ENCODE measurements at regions of chr1 and their contacts with region 1.

Region 1: GRCh38 chr1:182781841-182782586 is 7.6 kb upstream of the NPL start:
- DNase-seq: peak; percentile 51
- ATAC-seq: peak; percentile 88
- H3K4me3 ChIP-seq: no peak overlapping the region
- H3K27ac ChIP-seq: no peak overlapping the region
- H3K4me1 ChIP-seq: peaks cover 5% of the 10 kb centered on the region; the same call in 1 of the 2 replicates
- H3K27me3 ChIP-seq: no peaks in the 10 kb centered on the region
- CTCF ChIP-seq: peak; percentile 83 to 95 (median 89)
- EP300 ChIP-seq: no peak
- POLR2A ChIP-seq: no peak
- RAD21 ChIP-seq: peak; percentile 97

Region 2: GRCh38 chr1:182084487-182085316 is 697.3 kb before region 1 on chr1:
- CTCF ChIA-PET with region 1: interaction called, 4 read pairs
- POLR2A ChIA-PET with region 1: no interaction called
- RAD21 ChIA-PET with region 1: interaction called, 3 read pairs
- SMC1A ChIA-PET with region 1: interaction called, 5 read pairs
- in situ Hi-C with region 1: no loop called
- intact Hi-C with region 1: loop called (anchors 5 kb)
- DNase-seq: no peak
- ATAC-seq: peak; percentile 94
- H3K4me3 ChIP-seq: no peak overlapping the region
- H3K27ac ChIP-seq: no peak overlapping the region
- H3K4me1 ChIP-seq: no peaks in the 10 kb centered on the region
- H3K27me3 ChIP-seq: no peaks in the 10 kb centered on the region
- CTCF ChIP-seq: peak; percentile 67 to 75 (median 74)
- EP300 ChIP-seq: no peak
- POLR2A ChIP-seq: no peak
- RAD21 ChIP-seq: peak; percentile 89

Region 3: GRCh38 chr1:182430263-182431068 is 351.5 kb before region 1 on chr1:
- CTCF ChIA-PET with region 1: interaction called, 8 read pairs
- POLR2A ChIA-PET with region 1: no interaction called
- RAD21 ChIA-PET with region 1: interaction called, 4 read pairs
- SMC1A ChIA-PET with region 1: interaction called, 18 read pairs
- in situ Hi-C with region 1: no loop called
- intact Hi-C with region 1: no loop called
- DNase-seq: peak; percentile 50
- ATAC-seq: peak; percentile 52
- H3K4me3 ChIP-seq: no peak overlapping the region
- H3K27ac ChIP-seq: peak overlapping the region; percentile 48
- H3K4me1 ChIP-seq: peaks cover 34% of the 10 kb centered on the region
- H3K27me3 ChIP-seq: no peaks in the 10 kb centered on the region
- CTCF ChIP-seq: no peak
- EP300 ChIP-seq: 0 out of 4 replicates have a peak, but pooled peaks of 1 of the 2 experiments have one; percentile 26
- POLR2A ChIP-seq: no peak
- RAD21 ChIP-seq: no peak

Region 4: DNA sequence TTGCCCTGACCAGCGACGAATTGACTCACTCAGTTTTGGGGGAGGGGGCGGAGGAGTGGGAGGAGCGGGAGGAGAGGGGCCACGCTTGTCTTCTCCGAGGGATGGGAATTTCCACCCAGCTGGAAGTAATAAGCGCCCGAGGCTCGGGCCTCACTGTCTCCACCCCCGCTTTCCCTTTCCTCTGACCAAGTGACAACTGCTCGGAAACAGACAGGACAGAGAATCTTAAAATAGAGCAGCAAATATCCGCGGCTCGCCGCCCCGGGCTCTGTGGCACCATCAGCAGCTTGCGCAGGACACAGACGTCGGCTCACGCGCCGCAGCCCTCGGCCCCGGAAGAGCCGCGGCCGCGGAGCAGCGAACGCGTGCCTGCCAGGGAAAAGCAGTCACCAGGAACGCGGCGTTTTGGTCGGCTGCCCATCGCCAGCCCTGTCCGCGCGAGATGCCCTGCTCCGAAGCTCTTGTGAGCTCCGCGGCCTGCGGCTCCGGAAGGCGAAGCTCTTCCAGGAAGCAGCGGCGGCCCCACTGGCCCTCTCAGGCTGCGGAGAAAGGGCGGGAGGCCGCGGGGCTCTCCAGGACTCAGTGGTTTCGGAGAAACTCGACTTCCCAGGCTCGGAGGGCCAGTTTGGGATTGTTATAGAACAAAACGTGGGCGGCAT is 167.1 kb before region 1 on chr1:
- CTCF ChIA-PET with region 1: interaction called, 1,888 read pairs
- POLR2A ChIA-PET with region 1: interaction called, 5 read pairs
- RAD21 ChIA-PET with region 1: interaction called, 93 read pairs
- SMC1A ChIA-PET with region 1: interaction called, 48 read pairs
- in situ Hi-C with region 1: no loop called
- intact Hi-C with region 1: loop called (anchors 5 kb)
- DNase-seq: no peak
- ATAC-seq: peak; percentile 62
- H3K4me3 ChIP-seq: peak overlapping the region; percentile 63
- H3K27ac ChIP-seq: peak overlapping the region; percentile 95
- H3K4me1 ChIP-seq: peaks cover 66% of the 10 kb centered on the region
- H3K27me3 ChIP-seq: no peaks in the 10 kb centered on the region
- CTCF ChIP-seq: no peak
- EP300 ChIP-seq: peak in 1 of 2 experiments; percentile 54; a peak in 3 of 4 replicates
- POLR2A ChIP-seq: peak; percentile 84
- RAD21 ChIP-seq: peak; percentile 12; the same call in 1 of the 2 replicates

Region 5: DNA sequence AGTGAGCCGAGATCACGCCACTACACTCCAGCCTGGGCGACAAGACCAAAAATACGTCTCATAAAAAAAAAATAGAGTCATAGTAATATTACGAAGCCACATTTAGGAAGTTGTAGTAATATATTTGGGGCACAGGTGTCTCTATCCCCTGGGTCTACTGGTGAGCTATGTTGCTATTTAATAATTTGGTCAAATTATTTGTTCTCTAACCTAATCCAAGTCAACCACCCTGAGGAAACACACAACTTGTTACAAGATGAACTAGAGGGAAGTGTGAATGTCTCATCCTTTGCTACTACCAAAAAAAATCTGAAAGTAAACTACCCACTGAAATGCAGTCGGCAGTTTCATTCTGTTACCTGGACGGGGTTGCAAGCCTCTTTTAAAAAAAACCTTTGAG is 133.0 kb before region 1 on chr1:
- CTCF ChIA-PET with region 1: interaction called, 61 read pairs
- POLR2A ChIA-PET with region 1: interaction called, 3 read pairs
- RAD21 ChIA-PET with region 1: interaction called, 22 read pairs
- SMC1A ChIA-PET with region 1: interaction called, 49 read pairs
- in situ Hi-C with region 1: no loop called
- intact Hi-C with region 1: no loop called
- DNase-seq: no peak
- ATAC-seq: peak; percentile 75
- H3K4me3 ChIP-seq: no peak overlapping the region
- H3K27ac ChIP-seq: no peak overlapping the region
- H3K4me1 ChIP-seq: peaks cover 41% of the 10 kb centered on the region
- H3K27me3 ChIP-seq: no peaks in the 10 kb centered on the region
- CTCF ChIP-seq: 0 out of 6 replicates have a peak, but pooled peaks of 1 of the 3 experiments have one; percentile 2
- EP300 ChIP-seq: no peak
- POLR2A ChIP-seq: no peak
- RAD21 ChIP-seq: peak; percentile 13; the same call in 1 of the 2 replicates

Region 6: GRCh38 chr1:182716740-182717720 is 65.0 kb before region 1 on chr1:
- CTCF ChIA-PET with region 1: interaction called, 6 read pairs
- POLR2A ChIA-PET with region 1: interaction called, 3 read pairs
- RAD21 ChIA-PET with region 1: interaction called, 8 read pairs
- SMC1A ChIA-PET with region 1: interaction called, 14 read pairs
- in situ Hi-C with region 1: no loop called
- intact Hi-C with region 1: no loop called
- DNase-seq: peak; percentile 16
- ATAC-seq: peak; percentile 62
- H3K4me3 ChIP-seq: no peak overlapping the region
- H3K27ac ChIP-seq: no peak overlapping the region
- H3K4me1 ChIP-seq: peaks cover 3% of the 10 kb centered on the region
- H3K27me3 ChIP-seq: no peaks in the 10 kb centered on the region
- CTCF ChIP-seq: no peak
- EP300 ChIP-seq: no peak
- POLR2A ChIP-seq: no peak
- RAD21 ChIP-seq: no peak

Region 7: GRCh38 chr1:182839209-182840065 is 57.4 kb after region 1 on chr1 and contains the start of gene DHX9:
- CTCF ChIA-PET with region 1: interaction called, 14 read pairs
- POLR2A ChIA-PET with region 1: no interaction called
- RAD21 ChIA-PET with region 1: interaction called, 3 read pairs
- SMC1A ChIA-PET with region 1: interaction called, 9 read pairs
- in situ Hi-C with region 1: no loop called
- intact Hi-C with region 1: no loop called
- DNase-seq: peak; percentile 60
- ATAC-seq: peak; percentile 89
- H3K4me3 ChIP-seq: peak within 1 kb of the TSS; percentile 91
- H3K27ac ChIP-seq: peak within 1 kb of the TSS; percentile 81
- H3K4me1 ChIP-seq: no peaks in the 10 kb centered on the region
- H3K27me3 ChIP-seq: no peaks in the 10 kb centered on the region
- CTCF ChIP-seq: peak in 2 of 3 experiments; percentile 6 to 27; a peak in 2 of 6 replicates
- EP300 ChIP-seq: no peak
- POLR2A ChIP-seq: peak; percentile 98
- RAD21 ChIP-seq: no peak
- polyA plus RNA-seq, gene DHX9: 90.7 to 130 TPM